SK-N-SH (cell line): ENCODE measurements at regions of chr5 and their contacts with region 1.

Region 1: GRCh38 chr5:180328296-180329137 is 24.6 kb downstream of the GFPT2 start:
- DNase-seq: peak; percentile 87
- H3K4me3 ChIP-seq: no peak overlapping the region; a peak in 1 of 4 replicates
- H3K27ac ChIP-seq: no peak overlapping the region
- H3K4me1 ChIP-seq: peaks cover 0 to 12% of the 10 kb centered on the region in 2 experiments; a peak in 2 of 4 replicates
- H3K27me3 ChIP-seq: no peaks in the 10 kb centered on the region
- CTCF ChIP-seq: peak; percentile 81
- EP300 ChIP-seq: no peak
- RAD21 ChIP-seq: peak; percentile 73

Region 2: DNA sequence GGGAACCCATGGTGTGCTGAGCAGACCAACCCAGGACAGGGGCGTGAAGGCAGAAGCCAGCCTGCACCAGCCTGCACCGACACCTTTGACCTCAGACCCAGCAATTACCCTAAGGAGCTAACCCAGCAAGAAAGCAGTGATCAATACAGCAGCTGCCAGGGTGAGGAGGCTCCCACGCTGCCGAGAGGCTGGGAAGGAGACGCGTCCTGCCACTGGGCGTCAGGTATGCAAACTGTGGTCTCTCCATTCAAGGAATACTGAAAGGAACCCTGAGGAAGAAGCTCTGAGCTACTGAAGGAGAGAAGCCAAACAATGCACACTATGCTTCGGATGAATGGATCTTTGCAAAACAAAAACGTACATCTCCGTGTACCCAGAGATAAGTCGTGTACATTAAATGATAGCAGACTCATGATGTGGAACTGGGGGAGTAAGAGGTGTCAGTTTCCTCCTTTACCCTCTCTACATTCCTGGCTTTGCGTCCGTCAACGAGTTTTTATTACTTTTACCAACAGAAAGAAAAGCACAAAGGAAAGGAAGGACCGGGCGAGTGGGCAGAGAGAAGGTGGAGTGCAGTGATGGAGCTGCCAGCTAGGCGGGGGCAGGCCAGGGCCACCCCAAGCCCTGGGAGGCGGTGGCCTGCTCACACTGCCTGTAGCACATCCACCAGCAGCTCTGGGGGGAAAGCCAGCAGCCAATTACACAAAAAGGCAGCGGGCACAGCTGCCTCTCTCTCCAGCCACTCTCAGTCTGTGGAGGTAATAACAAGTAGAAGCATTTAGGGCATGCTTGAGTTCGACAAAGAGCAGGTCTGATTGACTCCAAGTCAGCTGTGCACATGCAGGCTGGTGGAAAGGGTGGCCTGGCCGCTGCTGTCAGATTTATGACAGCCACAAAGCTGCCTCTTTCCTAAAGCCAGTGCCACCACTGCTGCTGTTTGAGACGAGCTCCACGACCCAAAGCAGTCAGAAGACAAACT is 148.8 kb before region 1 on chr5:
- CTCF ChIA-PET with region 1: no interaction called
- POLR2A ChIA-PET with region 1: no interaction called
- DNase-seq: no peak
- H3K4me3 ChIP-seq: no peak overlapping the region
- H3K27ac ChIP-seq: no peak overlapping the region
- H3K4me1 ChIP-seq: peaks cover 0 to 24% of the 10 kb centered on the region in 2 experiments; a peak in 1 of 4 replicates
- H3K27me3 ChIP-seq: no peaks in the 10 kb centered on the region
- CTCF ChIP-seq: no peak
- EP300 ChIP-seq: no peak
- RAD21 ChIP-seq: no peak

Region 3: GRCh38 chr5:180201051-180201987 is 127.2 kb before region 1 on chr5:
- CTCF ChIA-PET with region 1: interaction called, 13 read pairs
- POLR2A ChIA-PET with region 1: no interaction called
- DNase-seq: peak; percentile 66
- H3K4me3 ChIP-seq: no peak overlapping the region
- H3K27ac ChIP-seq: no peak overlapping the region
- H3K4me1 ChIP-seq: no peaks in the 10 kb centered on the region
- H3K27me3 ChIP-seq: no peaks in the 10 kb centered on the region
- CTCF ChIP-seq: peak; percentile 37
- EP300 ChIP-seq: no peak
- RAD21 ChIP-seq: peak; percentile 57

Region 4: GRCh38 chr5:180291943-180292831 is 36.3 kb before region 1 on chr5 and contains the start of gene MAPK9:
- CTCF ChIA-PET with region 1: interaction called, 171 read pairs
- POLR2A ChIA-PET with region 1: interaction called, 4 read pairs
- DNase-seq: peak; percentile 97
- H3K4me3 ChIP-seq: peak within 1 kb of the TSS; percentile 85 to 92
- H3K27ac ChIP-seq: peak within 1 kb of the TSS; percentile 47 to 81; a peak in 3 of 4 replicates
- H3K4me1 ChIP-seq: peaks cover 0 to 39% of the 10 kb centered on the region in 2 experiments; a peak in 2 of 4 replicates
- H3K27me3 ChIP-seq: no peaks in the 10 kb centered on the region
- CTCF ChIP-seq: peak; percentile 16; the same call in 1 of the 2 replicates
- EP300 ChIP-seq: no peak
- RAD21 ChIP-seq: no peak
- polyA plus RNA-seq, gene MAPK9: 23.9 and 26.2 TPM in 2 replicates

Region 5: GRCh38 chr5:180315762-180316212 is 12.7 kb before region 1 on chr5:
- CTCF ChIA-PET with region 1: interaction called, 86 read pairs
- POLR2A ChIA-PET with region 1: no interaction called
- DNase-seq: peak; percentile 85
- H3K4me3 ChIP-seq: no peak overlapping the region; a peak in 1 of 4 replicates
- H3K27ac ChIP-seq: no peak overlapping the region
- H3K4me1 ChIP-seq: peaks cover 0 to 2% of the 10 kb centered on the region in 2 experiments; a peak in 1 of 4 replicates
- H3K27me3 ChIP-seq: no peaks in the 10 kb centered on the region
- CTCF ChIP-seq: peak; percentile 90
- EP300 ChIP-seq: no peak
- RAD21 ChIP-seq: peak; percentile 75

Region 6: GRCh38 chr5:180353048-180353979 is 24.8 kb after region 1 on chr5 and contains the start of gene GFPT2:
- CTCF ChIA-PET with region 1: interaction called, 15 read pairs
- POLR2A ChIA-PET with region 1: no interaction called
- DNase-seq: peak; percentile 100
- H3K4me3 ChIP-seq: peak within 1 kb of the TSS; percentile 55 to 65
- H3K27ac ChIP-seq: no peak within 1 kb of the TSS; a peak in 1 of 4 replicates
- H3K4me1 ChIP-seq: peaks cover 0 to 10% of the 10 kb centered on the region in 2 experiments; a peak in 1 of 4 replicates
- H3K27me3 ChIP-seq: peaks cover 12% of the 10 kb centered on the region; the same call in 1 of the 2 replicates
- CTCF ChIP-seq: no peak
- EP300 ChIP-seq: no peak
- RAD21 ChIP-seq: no peak
- polyA plus RNA-seq, gene GFPT2: 8.1 and 8.9 TPM in 2 replicates

Region 7: DNA sequence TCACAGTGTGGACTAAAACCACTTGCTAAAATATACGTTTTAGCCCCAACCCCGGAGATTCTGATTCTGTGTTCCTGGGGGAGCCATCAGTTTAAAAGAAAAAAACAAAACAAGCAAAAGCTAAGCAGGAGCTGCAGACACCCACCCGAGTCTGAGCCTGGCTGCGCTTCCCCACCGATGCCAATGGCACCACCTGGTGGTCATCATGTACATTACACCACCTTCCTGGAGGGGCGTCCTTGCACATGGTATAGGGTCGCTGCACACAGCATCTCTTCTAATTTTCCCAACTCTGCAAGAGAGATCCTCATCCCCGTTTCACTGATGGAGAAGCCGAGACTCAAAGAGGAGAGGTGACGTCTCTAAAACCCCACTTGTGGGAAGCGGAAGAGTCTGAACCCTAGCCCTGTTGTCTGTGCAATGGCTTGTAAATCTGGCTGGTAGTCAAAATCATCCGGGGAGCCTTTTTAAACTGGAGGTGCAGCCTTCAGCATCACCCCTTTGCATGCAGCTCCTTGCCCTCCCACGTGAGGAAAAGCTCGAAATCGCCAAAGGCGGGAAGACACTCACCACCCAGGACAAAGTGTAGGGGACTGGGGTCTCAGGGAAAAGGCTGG is 142.6 kb after region 1 on chr5:
- CTCF ChIA-PET with region 1: interaction called, 32 read pairs
- POLR2A ChIA-PET with region 1: no interaction called
- DNase-seq: peak; percentile 87
- H3K4me3 ChIP-seq: no peak overlapping the region; a peak in 1 of 4 replicates
- H3K27ac ChIP-seq: no peak overlapping the region
- H3K4me1 ChIP-seq: no peaks in the 10 kb centered on the region; a peak in 1 of 4 replicates
- H3K27me3 ChIP-seq: no peaks in the 10 kb centered on the region
- CTCF ChIP-seq: peak; percentile 90
- EP300 ChIP-seq: no peak
- RAD21 ChIP-seq: peak; percentile 85

Region 8: GRCh38 chr5:180499684-180500083 is 171.2 kb after region 1 on chr5:
- CTCF ChIA-PET with region 1: no interaction called
- POLR2A ChIA-PET with region 1: no interaction called
- DNase-seq: no peak
- H3K4me3 ChIP-seq: no peak overlapping the region
- H3K27ac ChIP-seq: no peak overlapping the region
- H3K4me1 ChIP-seq: peaks cover 7 to 9% of the 10 kb centered on the region in 2 experiments; a peak in 3 of 4 replicates
- H3K27me3 ChIP-seq: no peaks in the 10 kb centered on the region
- CTCF ChIP-seq: no peak
- EP300 ChIP-seq: no peak
- RAD21 ChIP-seq: no peak

Region 9: DNA sequence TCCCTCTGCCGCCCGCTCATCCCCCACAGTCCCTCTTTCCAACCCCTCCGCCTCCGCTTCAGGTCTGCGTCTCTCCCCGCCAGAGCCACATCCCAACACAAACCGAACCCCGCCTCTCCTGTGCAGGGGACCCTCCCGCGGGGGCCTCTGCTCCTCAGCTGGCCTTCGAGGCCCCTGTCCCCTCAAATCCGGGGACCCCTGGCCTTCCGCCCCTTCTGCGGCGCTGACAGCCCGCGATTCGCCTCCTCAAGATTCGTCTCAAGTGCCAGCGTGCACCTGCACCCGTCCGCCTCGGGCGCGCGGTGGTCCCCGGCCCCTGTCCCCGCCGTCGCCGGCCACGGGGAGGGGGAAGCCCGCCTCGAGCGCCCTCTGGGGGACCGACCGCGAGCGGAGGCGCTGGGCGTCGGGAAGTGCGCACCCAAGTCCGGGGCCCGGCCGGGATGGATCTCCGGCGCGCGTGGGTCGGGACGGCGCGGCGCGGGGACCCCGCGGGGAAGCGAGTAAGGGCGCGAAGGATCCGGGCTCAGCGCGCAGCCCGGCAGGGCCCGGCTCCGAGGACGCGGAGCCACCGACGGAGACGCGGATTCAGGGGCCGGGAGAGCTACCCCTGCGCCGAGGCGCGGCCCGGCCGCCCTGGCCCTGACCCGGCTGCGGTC is 320.3 kb after region 1 on chr5:
- CTCF ChIA-PET with region 1: no interaction called
- POLR2A ChIA-PET with region 1: no interaction called
- DNase-seq: peak; percentile 75
- H3K4me3 ChIP-seq: no peak overlapping the region
- H3K27ac ChIP-seq: no peak overlapping the region
- H3K4me1 ChIP-seq: no peaks in the 10 kb centered on the region
- H3K27me3 ChIP-seq: peaks cover 78% of the 10 kb centered on the region; the same call in 1 of the 2 replicates
- CTCF ChIP-seq: peak; percentile 14
- EP300 ChIP-seq: no peak
- RAD21 ChIP-seq: no peak